ENCODE measurements at regions of chr1 and their contacts with region 1.

Region 1: GRCh38 chr1:7646981-7647901 is 123.9 kb upstream of the VAMP3 start:
- DNase-seq: peak; percentile 46
- ATAC-seq: peak; percentile 63
- H3K4me3 ChIP-seq: no peak overlapping the region
- H3K27ac ChIP-seq: no peak overlapping the region
- H3K4me1 ChIP-seq: peaks cover 8% of the 10 kb centered on the region; the same call in 1 of the 2 replicates
- H3K27me3 ChIP-seq: peaks cover 22% of the 10 kb centered on the region; the same call in 1 of the 2 replicates
- CTCF ChIP-seq: peak; percentile 95
- POLR2A ChIP-seq: no peak
- RAD21 ChIP-seq: peak; percentile 98

Region 2: GRCh38 chr1:6602669-6603237 is 1044.5 kb before region 1 on chr1 and contains the start of gene KLHL21:
- CTCF ChIA-PET with region 1: no interaction called
- POLR2A ChIA-PET with region 1: no interaction called
- dilution Hi-C with region 1: no loop called
- in situ Hi-C with region 1: no loop called
- intact Hi-C with region 1: no loop called
- DNase-seq: peak; percentile 86
- ATAC-seq: peak; percentile 72
- H3K4me3 ChIP-seq: peak within 1 kb of the TSS; percentile 88
- H3K27ac ChIP-seq: peak within 1 kb of the TSS; percentile 95
- H3K4me1 ChIP-seq: peaks cover 14% of the 10 kb centered on the region
- H3K27me3 ChIP-seq: no peaks in the 10 kb centered on the region
- CTCF ChIP-seq: no peak
- POLR2A ChIP-seq: peak; percentile 97
- RAD21 ChIP-seq: no peak
- total RNA-seq, gene KLHL21: 12.0 and 14.2 TPM in 2 replicates

Region 3: DNA sequence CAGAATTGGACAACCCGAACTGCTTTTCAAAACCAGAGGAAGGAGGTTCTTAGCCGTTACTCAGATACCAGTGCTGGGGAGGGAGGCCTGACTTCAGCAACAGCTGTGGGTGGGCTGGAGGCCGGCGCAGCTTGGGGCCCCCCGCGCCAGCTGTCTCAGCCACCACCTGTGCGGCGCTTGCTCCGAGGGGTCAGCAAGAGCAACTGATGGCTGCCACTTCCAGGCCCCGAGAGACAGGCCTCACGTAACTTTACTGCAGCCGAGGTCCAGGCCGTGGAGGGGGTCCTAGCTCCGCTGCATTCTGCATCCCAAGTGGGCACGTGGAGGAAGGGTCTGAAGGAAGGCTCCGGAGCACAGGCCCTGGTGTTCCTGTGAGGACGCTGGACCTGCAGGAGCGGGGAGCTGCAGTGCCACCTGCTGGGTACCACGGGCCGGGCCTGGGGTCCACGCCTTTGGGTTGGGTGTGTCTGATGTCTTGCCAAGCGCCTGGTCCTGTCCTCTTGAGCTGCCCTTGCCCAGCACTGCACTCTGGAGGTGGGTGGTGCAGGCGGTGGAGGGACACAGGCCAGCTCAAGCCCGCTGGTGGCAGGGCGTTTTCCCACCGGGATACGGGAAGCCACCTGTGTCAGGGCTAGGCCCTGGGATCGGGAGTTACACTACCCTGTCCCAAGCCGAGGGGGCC is 1012.7 kb before region 1 on chr1:
- CTCF ChIA-PET with region 1: no interaction called
- POLR2A ChIA-PET with region 1: no interaction called
- dilution Hi-C with region 1: no loop called
- in situ Hi-C with region 1: no loop called
- intact Hi-C with region 1: loop called (anchors 5 kb)
- DNase-seq: peak; percentile 25
- ATAC-seq: peak; percentile 43
- H3K4me3 ChIP-seq: no peak overlapping the region
- H3K27ac ChIP-seq: no peak overlapping the region
- H3K4me1 ChIP-seq: peaks cover 2% of the 10 kb centered on the region; the same call in 1 of the 2 replicates
- H3K27me3 ChIP-seq: no peaks in the 10 kb centered on the region
- CTCF ChIP-seq: peak; percentile 38
- POLR2A ChIP-seq: no peak
- RAD21 ChIP-seq: peak; percentile 45

Region 4: DNA sequence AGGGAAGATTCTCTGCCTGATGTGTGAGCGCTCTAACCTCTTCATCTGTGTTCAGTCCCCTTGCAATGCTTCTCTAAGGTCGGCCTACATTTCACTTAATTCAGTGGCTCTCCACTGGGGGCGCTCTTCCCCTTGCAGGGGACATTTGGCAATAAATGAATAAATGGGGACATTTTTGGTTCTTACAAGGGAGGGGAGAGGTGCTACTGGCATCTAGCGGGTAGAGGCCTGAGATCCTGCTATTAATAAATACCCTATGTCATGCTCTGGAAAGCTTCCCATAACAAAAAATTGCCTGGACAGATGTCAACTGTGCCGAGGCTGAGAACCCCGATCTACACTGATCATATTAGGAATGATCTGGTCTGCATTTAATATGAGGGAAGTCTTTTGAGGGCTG is 919.7 kb before region 1 on chr1:
- CTCF ChIA-PET with region 1: no interaction called
- POLR2A ChIA-PET with region 1: no interaction called
- dilution Hi-C with region 1: no loop called
- in situ Hi-C with region 1: loop called (anchors 5 kb)
- intact Hi-C with region 1: no loop called
- DNase-seq: peak; percentile 54
- ATAC-seq: peak; percentile 22; the same call in 1 of the 2 replicates
- H3K4me3 ChIP-seq: no peak overlapping the region
- H3K27ac ChIP-seq: no peak overlapping the region
- H3K4me1 ChIP-seq: peaks cover 9% of the 10 kb centered on the region
- H3K27me3 ChIP-seq: peaks cover 3% of the 10 kb centered on the region; the same call in 1 of the 2 replicates
- CTCF ChIP-seq: peak; percentile 79
- POLR2A ChIP-seq: no peak
- RAD21 ChIP-seq: peak; percentile 66

Region 5: DNA sequence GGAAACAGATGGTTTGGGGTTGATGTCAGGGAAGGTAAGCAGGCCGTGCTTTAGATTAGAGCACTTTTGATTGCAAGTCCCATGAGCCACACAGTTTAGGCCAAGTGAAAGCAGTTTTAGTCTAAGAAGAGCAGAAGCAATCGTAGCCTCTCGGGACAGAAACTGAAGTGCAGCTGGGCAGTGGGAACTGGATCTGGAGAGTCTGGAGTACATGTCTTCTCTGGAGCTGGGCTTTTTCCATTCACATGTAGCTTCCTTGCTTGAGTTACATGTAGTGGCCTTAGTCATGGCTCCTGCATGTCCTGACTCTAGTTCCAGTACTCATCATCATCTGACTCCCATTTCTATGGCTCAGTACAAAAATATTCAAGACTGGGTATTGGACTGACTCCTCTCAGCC is 845.3 kb before region 1 on chr1:
- CTCF ChIA-PET with region 1: no interaction called
- POLR2A ChIA-PET with region 1: no interaction called
- dilution Hi-C with region 1: no loop called
- in situ Hi-C with region 1: loop called (anchors 10 kb)
- intact Hi-C with region 1: no loop called
- DNase-seq: peak; percentile 81
- ATAC-seq: peak; percentile 33
- H3K4me3 ChIP-seq: no peak overlapping the region
- H3K27ac ChIP-seq: peak overlapping the region; percentile 73
- H3K4me1 ChIP-seq: peaks cover 35% of the 10 kb centered on the region
- H3K27me3 ChIP-seq: no peaks in the 10 kb centered on the region
- CTCF ChIP-seq: no peak
- POLR2A ChIP-seq: no peak
- RAD21 ChIP-seq: no peak

Region 6: DNA sequence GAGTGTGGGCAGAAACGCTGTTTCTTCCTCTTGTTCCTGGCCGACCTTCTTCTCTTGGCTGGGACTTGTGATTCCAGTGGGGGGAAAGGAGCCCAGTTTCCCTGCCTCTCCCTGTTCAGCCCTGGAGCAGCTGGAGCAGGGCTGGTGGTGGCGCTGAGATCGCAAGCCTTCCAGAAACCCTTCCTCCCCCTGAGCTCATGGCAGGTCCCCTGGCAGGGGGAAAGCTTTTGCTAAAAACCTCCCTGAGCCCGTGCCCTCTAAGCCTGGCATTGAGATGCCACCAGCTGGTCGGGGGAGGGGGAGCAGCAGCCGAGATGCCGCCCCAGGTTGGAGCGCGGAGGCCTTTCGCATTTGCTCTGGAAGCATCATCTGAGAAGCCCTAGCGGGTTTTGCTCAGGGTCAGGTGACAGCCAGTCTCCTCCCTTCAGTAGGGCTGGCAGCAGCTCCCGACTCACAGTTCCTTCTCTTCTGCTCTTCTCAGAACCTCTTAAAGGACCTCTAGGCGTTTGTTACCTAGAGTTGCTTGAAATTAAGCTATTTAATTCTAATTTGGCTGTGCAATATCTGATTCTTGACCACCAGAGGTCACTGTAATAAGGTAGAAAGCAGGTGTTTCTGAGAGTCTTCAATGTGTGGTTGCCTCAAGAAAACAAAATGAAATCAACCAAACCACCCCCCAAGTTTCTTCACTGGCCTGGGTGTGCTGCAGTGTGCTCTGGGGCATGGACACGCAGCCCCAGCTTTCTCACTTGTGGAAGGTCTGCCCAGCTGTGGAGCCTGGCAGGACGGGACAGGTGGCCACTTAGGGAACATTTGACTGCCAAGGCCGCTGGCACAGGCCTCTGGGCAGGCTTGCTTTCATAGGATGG is 604.7 kb before region 1 on chr1:
- CTCF ChIA-PET with region 1: interaction called, 6 read pairs
- POLR2A ChIA-PET with region 1: no interaction called
- dilution Hi-C with region 1: no loop called
- in situ Hi-C with region 1: loop called (anchors 5 kb)
- intact Hi-C with region 1: loop called (anchors 1 kb)
- DNase-seq: peak; percentile 57
- ATAC-seq: peak; percentile 56; the same call in 1 of the 2 replicates
- H3K4me3 ChIP-seq: no peak overlapping the region
- H3K27ac ChIP-seq: no peak overlapping the region
- H3K4me1 ChIP-seq: no peaks in the 10 kb centered on the region
- H3K27me3 ChIP-seq: peaks cover 13% of the 10 kb centered on the region
- CTCF ChIP-seq: peak; percentile 63
- POLR2A ChIP-seq: no peak
- RAD21 ChIP-seq: peak; percentile 70

Region 7: DNA sequence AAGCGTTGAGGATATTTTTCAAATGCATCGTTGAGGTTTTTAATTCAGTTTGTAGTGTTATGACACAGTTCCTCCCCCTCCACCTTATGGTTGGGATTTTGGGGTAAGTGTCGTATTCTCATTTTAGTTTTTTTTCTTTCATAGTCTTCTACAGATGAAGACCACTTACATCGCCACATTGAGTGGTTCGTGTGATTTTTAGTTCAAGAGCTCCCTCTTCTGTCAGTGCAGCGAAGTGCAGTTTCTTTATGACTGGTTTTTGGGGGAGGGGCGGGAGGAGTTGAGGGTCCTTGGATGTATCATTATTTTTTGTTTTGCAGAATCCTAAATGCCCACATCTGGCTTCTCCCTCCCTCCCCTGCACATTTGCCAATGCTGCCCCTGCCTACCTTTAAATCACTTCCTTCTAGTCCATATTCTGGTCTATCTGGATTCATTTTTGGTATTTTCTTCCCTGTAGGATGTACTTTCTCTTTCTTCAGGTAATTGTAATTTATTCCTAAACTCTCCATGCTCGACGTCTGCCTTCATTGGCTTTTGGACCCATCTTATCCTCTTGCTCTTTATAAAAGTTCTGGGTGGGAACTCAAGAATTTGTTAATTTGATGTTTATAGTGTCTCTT is 428.9 kb before region 1 on chr1:
- CTCF ChIA-PET with region 1: interaction called, 3 read pairs
- POLR2A ChIA-PET with region 1: no interaction called
- dilution Hi-C with region 1: no loop called
- in situ Hi-C with region 1: no loop called
- intact Hi-C with region 1: loop called (anchors 1 kb)
- DNase-seq: peak; percentile 63
- ATAC-seq: peak; percentile 67; the same call in 1 of the 2 replicates
- H3K4me3 ChIP-seq: no peak overlapping the region
- H3K27ac ChIP-seq: no peak overlapping the region
- H3K4me1 ChIP-seq: peaks cover 3% of the 10 kb centered on the region
- H3K27me3 ChIP-seq: no peaks in the 10 kb centered on the region
- CTCF ChIP-seq: peak; percentile 77
- POLR2A ChIP-seq: no peak
- RAD21 ChIP-seq: peak; percentile 78

Region 8: DNA sequence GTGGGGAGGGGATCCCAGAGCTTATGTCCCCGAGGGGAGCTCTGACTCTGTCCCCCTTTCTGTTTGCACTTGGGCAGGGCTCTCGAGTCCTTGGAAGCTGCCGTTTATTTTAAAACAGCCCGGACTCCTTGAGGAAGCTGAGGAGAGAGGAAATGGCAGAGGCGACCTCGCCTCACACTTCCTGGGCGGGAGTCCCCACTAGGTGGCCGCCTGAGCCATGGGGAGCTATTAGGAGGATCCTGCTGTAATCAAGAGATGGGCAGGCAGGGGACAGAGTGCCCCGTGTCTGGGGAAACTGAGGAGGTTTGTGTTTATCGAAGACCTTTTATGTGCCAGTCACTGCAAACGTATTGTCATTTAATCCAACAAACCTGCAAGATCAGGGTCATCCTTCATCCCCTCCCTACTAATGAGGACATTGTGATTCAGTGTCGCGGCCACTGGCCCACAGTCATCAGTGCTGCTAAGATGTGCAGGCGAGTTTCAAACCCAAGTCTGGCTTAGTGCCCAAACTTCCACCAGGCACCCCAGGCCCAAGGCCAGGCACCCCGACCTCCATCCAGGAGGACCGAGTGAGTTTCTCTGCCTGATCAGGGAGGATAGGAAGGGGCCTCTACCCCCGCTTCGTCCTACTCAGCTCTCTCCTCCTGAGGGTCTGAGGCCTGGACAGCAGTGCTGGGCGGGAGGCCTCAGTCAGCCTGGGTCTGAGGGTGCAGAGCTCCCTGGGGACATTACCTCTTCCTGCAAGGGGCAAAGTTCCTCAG is 193.0 kb before region 1 on chr1:
- CTCF ChIA-PET with region 1: no interaction called
- POLR2A ChIA-PET with region 1: no interaction called
- dilution Hi-C with region 1: no loop called
- in situ Hi-C with region 1: no loop called
- intact Hi-C with region 1: loop called (anchors 2 kb)
- DNase-seq: peak; percentile 39
- ATAC-seq: peak; percentile 75
- H3K4me3 ChIP-seq: no peak overlapping the region
- H3K27ac ChIP-seq: no peak overlapping the region
- H3K4me1 ChIP-seq: no peaks in the 10 kb centered on the region
- H3K27me3 ChIP-seq: no peaks in the 10 kb centered on the region
- CTCF ChIP-seq: peak; percentile 58
- POLR2A ChIP-seq: no peak
- RAD21 ChIP-seq: peak; percentile 74

Region 9: GRCh38 chr1:7470880-7471638 is 176.2 kb before region 1 on chr1:
- CTCF ChIA-PET with region 1: no interaction called
- POLR2A ChIA-PET with region 1: no interaction called
- dilution Hi-C with region 1: no loop called
- in situ Hi-C with region 1: no loop called
- intact Hi-C with region 1: no loop called
- DNase-seq: peak; percentile 99
- ATAC-seq: peak; percentile 79
- H3K4me3 ChIP-seq: no peak overlapping the region
- H3K27ac ChIP-seq: peak overlapping the region; percentile 97
- H3K4me1 ChIP-seq: peaks cover 28% of the 10 kb centered on the region
- H3K27me3 ChIP-seq: no peaks in the 10 kb centered on the region
- CTCF ChIP-seq: no peak
- POLR2A ChIP-seq: 0 out of 2 replicates have a peak, but pooled peaks have one; percentile 19
- RAD21 ChIP-seq: peak; percentile 36

Region 10: GRCh38 chr1:7690496-7691182 is 43.4 kb after region 1 on chr1:
- CTCF ChIA-PET with region 1: no interaction called
- POLR2A ChIA-PET with region 1: no interaction called
- dilution Hi-C with region 1: no loop called
- in situ Hi-C with region 1: no loop called
- intact Hi-C with region 1: no loop called
- DNase-seq: no peak
- ATAC-seq: no peak
- H3K4me3 ChIP-seq: no peak overlapping the region
- H3K27ac ChIP-seq: no peak overlapping the region
- H3K4me1 ChIP-seq: no peaks in the 10 kb centered on the region
- H3K27me3 ChIP-seq: peaks cover 34% of the 10 kb centered on the region
- CTCF ChIP-seq: no peak
- POLR2A ChIP-seq: no peak
- RAD21 ChIP-seq: no peak

Measured in IMR-90 (cell line).